ENCODE measurements at regions of chr21 and their contacts with region 1.

Region 1: DNA sequence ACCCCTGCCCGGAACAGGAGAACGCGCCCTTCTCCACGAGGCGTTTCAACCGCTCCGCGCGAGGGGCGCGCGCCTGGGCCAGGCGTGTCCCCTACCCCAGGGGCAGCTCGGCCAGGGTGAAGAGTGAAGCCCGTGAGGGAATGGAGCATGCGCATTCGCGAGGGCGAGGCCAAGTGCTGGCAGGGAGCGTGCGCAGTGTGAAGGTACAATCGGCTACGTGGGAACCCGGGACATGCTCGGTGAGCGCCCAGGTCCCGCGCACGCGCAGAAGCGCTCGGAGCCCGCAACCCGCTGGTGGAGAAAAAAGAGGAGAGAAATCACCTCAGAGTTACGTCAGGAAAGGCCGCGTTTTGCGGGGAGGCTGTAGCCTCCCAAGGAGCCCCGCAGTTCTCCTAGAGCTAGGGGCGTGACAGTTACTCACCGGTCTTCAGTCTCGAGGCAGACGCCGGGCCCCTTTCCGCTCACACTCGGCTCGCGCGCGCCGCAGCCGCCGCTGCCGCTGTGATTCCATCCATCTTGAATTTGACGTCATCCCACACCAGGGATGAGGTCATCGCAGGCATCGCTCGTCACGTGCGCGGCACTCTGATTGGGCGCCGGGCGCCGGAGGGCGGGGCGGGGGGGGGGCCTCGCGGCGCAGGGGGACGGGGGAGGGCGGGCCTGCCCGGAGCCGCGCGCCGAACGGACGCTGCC is at the start of gene ZBTB21:
- DNase-seq: peak; percentile 99
- H3K4me3 ChIP-seq: peak within 1 kb of the TSS; percentile 76 to 84 (median 78)
- H3K27ac ChIP-seq: peak within 1 kb of the TSS; percentile 97 to 98
- H3K4me1 ChIP-seq: peaks cover 0 to 5% (median 2%) of the 10 kb centered on the region in 3 donors
- H3K27me3 ChIP-seq: no peaks in the 10 kb centered on the region
- CTCF ChIP-seq: no peak
- total RNA-seq, gene ZBTB21: 16.0 TPM

Region 2: GRCh38 chr21:41160036-41160435 is 849.9 kb before region 1 on chr21:
- intact Hi-C with region 1: no loop called
- DNase-seq: no peak
- H3K4me3 ChIP-seq: no peak overlapping the region
- H3K27ac ChIP-seq: no peak overlapping the region
- H3K4me1 ChIP-seq: no peaks in the 10 kb centered on the region
- H3K27me3 ChIP-seq: no peaks in the 10 kb centered on the region
- CTCF ChIP-seq: no peak

Region 3: GRCh38 chr21:41725421-41726041 is 284.4 kb before region 1 on chr21:
- intact Hi-C with region 1: no loop called
- DNase-seq: peak in 3 of 5 donors; percentile 31 to 71 (median 57)
- H3K4me3 ChIP-seq: no peak overlapping the region
- H3K27ac ChIP-seq: no peak overlapping the region
- H3K4me1 ChIP-seq: peaks cover 0 to 16% (median 4%) of the 10 kb centered on the region in 3 donors
- H3K27me3 ChIP-seq: peaks cover 2% of the 10 kb centered on the region
- CTCF ChIP-seq: no peak

Region 4: GRCh38 chr21:42107881-42108553 is 98.0 kb after region 1 on chr21:
- intact Hi-C with region 1: loop called (anchors 10 kb)
- DNase-seq: peak; percentile 59 to 89 (median 80)
- H3K4me3 ChIP-seq: no peak overlapping the region
- H3K27ac ChIP-seq: no peak overlapping the region
- H3K4me1 ChIP-seq: peaks cover 0 to 2% (median 0%) of the 10 kb centered on the region in 3 donors
- H3K27me3 ChIP-seq: no peaks in the 10 kb centered on the region
- CTCF ChIP-seq: peak; percentile 69

Region 5: DNA sequence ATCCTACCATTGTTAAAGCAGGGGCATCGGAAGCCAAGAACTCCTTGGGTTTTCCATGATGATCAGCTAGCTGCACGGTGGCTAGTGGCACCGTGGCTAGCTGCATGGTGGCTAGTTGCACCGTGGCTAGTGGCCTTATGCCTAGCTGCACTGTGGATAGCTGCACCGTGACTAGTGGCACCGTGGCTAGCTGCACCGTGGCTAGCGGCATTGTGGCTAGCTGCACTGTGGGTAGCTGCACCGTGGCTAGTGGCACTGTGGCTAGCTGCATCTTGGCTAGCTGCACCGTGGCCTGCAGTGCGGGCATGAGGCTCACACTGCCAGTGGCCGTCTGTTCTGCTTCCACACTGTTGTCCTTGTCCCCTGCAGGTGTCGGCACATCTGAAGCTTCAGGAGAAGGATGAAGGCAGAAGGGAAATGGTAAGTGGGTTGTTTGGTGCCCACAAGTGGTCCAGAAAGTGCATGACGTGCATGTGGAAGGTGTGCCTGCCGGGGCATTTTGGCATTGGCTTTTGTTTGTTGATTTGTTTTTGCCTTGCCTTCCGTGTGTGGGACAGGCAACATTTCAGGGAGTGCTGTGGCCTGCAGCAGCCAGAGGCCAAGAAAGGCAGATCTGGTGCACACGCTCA is 266.7 kb after region 1 on chr21:
- intact Hi-C with region 1: no loop called
- DNase-seq: peak in 1 of 5 donors; percentile 59
- H3K4me3 ChIP-seq: no peak overlapping the region
- H3K27ac ChIP-seq: no peak overlapping the region
- H3K4me1 ChIP-seq: no peaks in the 10 kb centered on the region
- H3K27me3 ChIP-seq: no peaks in the 10 kb centered on the region
- CTCF ChIP-seq: no peak